GM10248 (cell line): ENCODE measurements at regions of chr1 and their contacts with region 1.

Region 1: DNA sequence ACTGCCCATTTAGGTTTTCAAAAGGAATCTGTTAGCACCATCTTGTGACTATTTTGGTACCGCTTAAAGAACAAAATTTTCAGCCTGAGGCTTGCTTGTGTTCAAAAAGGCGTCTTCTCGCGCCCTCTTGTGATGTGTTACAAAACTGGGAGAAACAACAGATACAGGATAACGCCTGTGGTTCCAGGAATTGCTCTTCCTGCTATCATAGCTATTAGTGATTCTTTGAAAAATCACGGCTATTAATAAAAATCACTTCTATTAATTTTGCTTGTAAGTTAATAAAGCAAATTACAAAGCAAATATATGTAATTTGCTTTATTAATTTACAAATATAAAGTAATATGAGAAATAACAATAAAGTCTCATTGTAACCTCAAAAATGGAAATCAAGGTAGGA is 82.2 kb upstream of the ABCD3 start:
- DNase-seq: peak; percentile 35
- CTCF ChIP-seq: peak; percentile 77

Region 2: DNA sequence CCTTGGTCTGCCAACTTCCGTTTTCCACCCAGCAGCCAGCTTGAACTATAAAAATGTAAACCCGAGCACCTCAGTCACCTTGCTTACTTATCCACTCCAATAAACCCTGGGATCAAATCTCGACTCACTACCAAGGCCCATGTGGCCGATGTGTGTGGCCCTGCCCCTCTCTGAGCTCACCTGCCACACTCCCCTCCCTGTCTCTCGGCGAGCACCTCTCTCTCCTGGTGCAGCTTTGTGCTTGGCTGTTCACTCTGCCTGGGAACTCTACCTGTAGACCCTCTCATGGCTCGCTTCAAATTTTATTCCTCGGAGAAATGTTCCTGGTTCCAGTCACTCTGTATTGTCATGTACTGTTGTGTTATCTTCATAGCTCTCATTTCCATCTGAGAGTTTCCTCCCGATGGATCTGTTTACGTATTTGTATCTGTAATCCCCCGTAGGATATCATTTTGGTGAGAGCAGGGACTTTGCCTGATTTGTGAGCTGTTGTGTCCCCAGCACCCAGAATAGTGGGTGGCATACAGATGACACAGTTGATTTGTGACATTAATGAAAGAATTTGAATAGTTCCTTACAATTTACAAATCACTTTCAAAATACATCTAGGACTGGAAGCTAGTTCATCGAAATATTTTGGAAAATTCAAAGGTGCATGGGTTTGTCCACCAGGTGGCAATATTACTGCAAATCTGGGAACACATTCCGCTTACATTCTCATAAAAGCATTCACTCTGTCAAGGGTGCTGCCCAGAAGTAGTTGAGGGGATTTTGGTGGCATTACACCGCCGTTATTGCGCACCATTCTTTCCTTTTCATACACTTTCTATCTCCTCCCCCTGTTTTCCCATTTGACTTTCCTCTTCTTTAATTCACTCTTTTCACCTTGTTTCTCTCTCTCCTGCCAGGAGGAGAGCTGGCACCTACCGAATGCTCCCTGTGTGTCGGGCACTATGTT is 310.3 kb before region 1 on chr1:
- CTCF ChIA-PET with region 1: interaction called, 165 read pairs
- POLR2A ChIA-PET with region 1: no interaction called
- DNase-seq: peak; percentile 45
- CTCF ChIP-seq: peak; percentile 52

Region 3: GRCh38 chr1:94039514-94039870 is 296.5 kb before region 1 on chr1:
- CTCF ChIA-PET with region 1: interaction called, 165 read pairs
- POLR2A ChIA-PET with region 1: no interaction called
- DNase-seq: peak; percentile 59
- CTCF ChIP-seq: peak; percentile 88

Region 4: DNA sequence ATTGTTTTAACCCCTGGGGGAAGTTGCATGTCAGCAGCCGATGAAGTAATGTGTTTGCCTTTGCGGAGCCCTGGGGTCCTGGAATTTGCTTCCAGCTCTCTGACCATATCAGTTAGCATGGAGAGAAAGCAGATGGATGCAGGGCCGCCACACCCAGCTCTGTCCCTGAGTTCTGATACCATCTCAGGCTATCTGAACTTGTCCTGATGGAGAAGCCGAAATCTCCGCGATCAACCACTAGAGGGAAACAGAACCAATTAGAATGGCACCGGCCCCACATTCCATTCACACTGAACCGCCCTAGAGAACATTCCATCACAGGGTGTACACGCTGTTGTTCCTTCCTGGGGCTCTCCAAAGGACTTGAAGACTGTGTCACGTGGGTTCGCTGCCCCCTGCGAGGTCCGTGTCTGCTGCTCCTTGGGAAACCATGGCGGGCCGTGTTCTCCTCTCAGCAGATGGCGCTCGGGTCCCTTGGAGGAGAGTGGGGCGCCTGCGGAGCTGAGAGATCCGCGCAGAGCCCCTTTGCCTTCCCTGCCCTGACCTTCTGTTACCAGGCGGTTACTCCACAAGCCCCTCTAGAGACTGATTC is 290.4 kb before region 1 on chr1:
- CTCF ChIA-PET with region 1: interaction called, 165 read pairs
- POLR2A ChIA-PET with region 1: no interaction called
- DNase-seq: peak; percentile 53
- CTCF ChIP-seq: peak; percentile 34

Region 5: GRCh38 chr1:94055459-94056122 is 280.4 kb before region 1 on chr1:
- CTCF ChIA-PET with region 1: interaction called, 128 read pairs
- POLR2A ChIA-PET with region 1: no interaction called
- DNase-seq: no peak
- CTCF ChIP-seq: no peak

Region 6: GRCh38 chr1:94061513-94062443 is 274.2 kb before region 1 on chr1:
- CTCF ChIA-PET with region 1: interaction called, 128 read pairs
- POLR2A ChIA-PET with region 1: no interaction called
- DNase-seq: peak; percentile 74
- CTCF ChIP-seq: peak; percentile 80

Region 7: GRCh38 chr1:94411237-94411636 is 75.3 kb after region 1 on chr1:
- CTCF ChIA-PET with region 1: no interaction called
- POLR2A ChIA-PET with region 1: no interaction called
- DNase-seq: no peak
- CTCF ChIP-seq: no peak

Region 8: DNA sequence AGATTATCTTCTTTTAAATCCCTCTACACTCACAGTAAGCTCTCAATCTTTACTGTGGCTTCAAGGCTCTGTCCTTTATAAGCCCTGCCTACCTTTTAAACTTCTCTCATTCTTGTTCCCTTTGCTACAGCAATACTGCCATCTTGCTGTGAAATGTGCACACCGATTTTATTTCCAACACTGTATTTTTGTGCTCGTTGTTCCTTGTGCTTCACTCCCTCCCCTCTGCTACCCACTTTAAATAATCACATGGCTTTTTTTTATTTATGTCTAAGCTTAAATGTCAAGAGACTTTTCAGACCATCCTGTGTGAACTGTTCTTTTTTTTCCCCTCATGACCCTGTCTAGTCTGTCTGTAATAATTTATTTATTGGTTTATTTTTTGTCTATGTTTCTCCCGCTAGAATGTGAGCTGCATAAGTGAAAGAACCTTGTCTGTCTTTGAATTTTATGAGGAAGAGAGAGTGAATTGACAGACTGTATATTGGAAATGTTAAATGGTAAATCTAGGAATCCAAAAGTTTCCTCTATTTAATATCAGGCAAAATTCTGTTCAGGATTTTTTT is 127.9 kb after region 1 on chr1:
- CTCF ChIA-PET with region 1: interaction called, 18 read pairs
- POLR2A ChIA-PET with region 1: no interaction called
- DNase-seq: peak; percentile 22
- CTCF ChIP-seq: peak; percentile 60